PC-9 (cell line): ENCODE measurements at regions of chr5 and their contacts with region 1.

Region 1: GRCh38 chr5:95646554-95647431 is at the start of gene RFESD:
- DNase-seq: peak; percentile 88 to 93
- H3K4me3 ChIP-seq: peak within 1 kb of the TSS; percentile 89
- H3K27ac ChIP-seq: peak within 1 kb of the TSS; percentile 75
- H3K4me1 ChIP-seq: peaks cover 16% of the 10 kb centered on the region
- H3K27me3 ChIP-seq: no peaks in the 10 kb centered on the region
- CTCF ChIP-seq: peak; percentile 36; the same call in 1 of the 2 replicates
- total RNA-seq, gene RFESD: 4.6 and 5.0 TPM in 2 replicates

Region 2: GRCh38 chr5:95554647-95555548 is 91.9 kb before region 1 on chr5 and contains the starts of genes ARSK and SKIC3:
- CTCF ChIA-PET with region 1: no interaction called
- POLR2A ChIA-PET with region 1: no interaction called
- intact Hi-C with region 1: loop called (anchors 2 kb)
- DNase-seq: peak; percentile 92 to 96
- H3K4me3 ChIP-seq: peak within 1 kb of the TSS; percentile 71
- H3K27ac ChIP-seq: peak within 1 kb of the TSS; percentile 84
- H3K4me1 ChIP-seq: peaks cover 16% of the 10 kb centered on the region
- H3K27me3 ChIP-seq: no peaks in the 10 kb centered on the region
- CTCF ChIP-seq: no peak; the same call in 1 of the 2 replicates
- total RNA-seq, gene ARSK: 5.2 and 5.8 TPM in 2 replicates
- total RNA-seq, gene SKIC3: 43.7 and 50.7 TPM in 2 replicates

Region 3: GRCh38 chr5:95730730-95731570 is 84.2 kb after region 1 on chr5 and contains the start of gene RHOBTB3:
- CTCF ChIA-PET with region 1: interaction called, 4 read pairs
- POLR2A ChIA-PET with region 1: interaction called, 3 read pairs
- intact Hi-C with region 1: loop called (anchors 5 kb)
- DNase-seq: peak; percentile 71 to 89
- H3K4me3 ChIP-seq: peak within 1 kb of the TSS; percentile 73
- H3K27ac ChIP-seq: peak within 1 kb of the TSS; percentile 56
- H3K4me1 ChIP-seq: peaks cover 64% of the 10 kb centered on the region
- H3K27me3 ChIP-seq: no peaks in the 10 kb centered on the region
- CTCF ChIP-seq: no peak
- total RNA-seq, gene RHOBTB3: 87.6 and 99.6 TPM in 2 replicates

Region 4: GRCh38 chr5:95846554-95847260 is 199.9 kb after region 1 on chr5:
- CTCF ChIA-PET with region 1: interaction called, 5 read pairs
- POLR2A ChIA-PET with region 1: no interaction called
- intact Hi-C with region 1: loop called (anchors 1 kb)
- DNase-seq: peak; percentile 48 to 55
- H3K4me3 ChIP-seq: no peak overlapping the region
- H3K27ac ChIP-seq: no peak overlapping the region
- H3K4me1 ChIP-seq: peaks cover 25% of the 10 kb centered on the region
- H3K27me3 ChIP-seq: no peaks in the 10 kb centered on the region
- CTCF ChIP-seq: peak; percentile 95

Region 5: GRCh38 chr5:96601811-96602244 is 955.0 kb after region 1 on chr5:
- CTCF ChIA-PET with region 1: no interaction called
- POLR2A ChIA-PET with region 1: no interaction called
- intact Hi-C with region 1: loop called (anchors 2 kb)
- DNase-seq: peak; percentile 32 to 38
- H3K4me3 ChIP-seq: no peak overlapping the region
- H3K27ac ChIP-seq: no peak overlapping the region
- H3K4me1 ChIP-seq: no peaks in the 10 kb centered on the region
- H3K27me3 ChIP-seq: no peaks in the 10 kb centered on the region
- CTCF ChIP-seq: peak; percentile 89

Region 6: GRCh38 chr5:97183100-97183929 is 1536.5 kb after region 1 on chr5 and contains the start of gene RIOK2:
- CTCF ChIA-PET with region 1: no interaction called
- POLR2A ChIA-PET with region 1: no interaction called
- intact Hi-C with region 1: loop called (anchors 5 kb)
- DNase-seq: peak; percentile 87 to 89
- H3K4me3 ChIP-seq: peak within 1 kb of the TSS; percentile 93
- H3K27ac ChIP-seq: peak within 1 kb of the TSS; percentile 91
- H3K4me1 ChIP-seq: peaks cover 17% of the 10 kb centered on the region
- H3K27me3 ChIP-seq: no peaks in the 10 kb centered on the region
- CTCF ChIP-seq: no peak
- total RNA-seq, gene RIOK2: 14.4 and 18.4 TPM in 2 replicates